Activated CD4-positive, alpha-beta T cell treated with anti-CD3 and anti-CD28 coated beads for 36 hours (primary cell): ENCODE measurements at regions of chr19 and their contacts with region 1.

Region 1: GRCh38 chr19:41706741-41707501 is 1.5 kb upstream of the CEACAM5 start:
- DNase-seq: peak; percentile 84
- ATAC-seq: peak; percentile 96
- H3K4me3 Mint-ChIP-seq: peak overlapping the region; percentile 28
- H3K27ac Mint-ChIP-seq: no peak overlapping the region
- H3K4me1 Mint-ChIP-seq: peaks cover 3% of the 10 kb centered on the region
- H3K27me3 Mint-ChIP-seq: peaks cover 26% of the 10 kb centered on the region

Region 2: DNA sequence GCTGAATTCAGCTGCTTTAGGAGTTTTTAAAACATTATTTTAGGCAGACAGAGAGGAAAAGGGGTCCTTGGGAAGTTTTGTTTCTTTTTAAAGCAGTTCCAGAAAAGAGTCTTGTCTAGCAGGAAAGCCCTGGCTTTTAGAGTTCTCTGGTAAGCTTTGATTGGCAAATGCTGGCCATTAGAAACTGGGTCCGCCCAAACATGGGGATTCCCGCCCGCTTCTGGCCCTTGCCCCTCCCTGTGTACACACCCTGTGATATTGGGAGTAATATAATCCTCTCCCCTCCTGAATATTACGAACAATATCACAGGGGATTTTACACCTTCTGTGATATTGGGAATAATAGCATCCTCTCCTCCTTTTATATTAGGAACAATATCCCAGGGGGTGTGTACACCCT is 205.1 kb before region 1 on chr19:
- CTCF ChIA-PET with region 1: no interaction called
- POLR2A ChIA-PET with region 1: no interaction called
- intact Hi-C with region 1: no loop called
- DNase-seq: no peak
- ATAC-seq: no peak
- H3K4me3 Mint-ChIP-seq: no peak overlapping the region
- H3K27ac Mint-ChIP-seq: no peak overlapping the region
- H3K4me1 Mint-ChIP-seq: peaks cover 3% of the 10 kb centered on the region
- H3K27me3 Mint-ChIP-seq: peaks cover 23% of the 10 kb centered on the region

Region 3: DNA sequence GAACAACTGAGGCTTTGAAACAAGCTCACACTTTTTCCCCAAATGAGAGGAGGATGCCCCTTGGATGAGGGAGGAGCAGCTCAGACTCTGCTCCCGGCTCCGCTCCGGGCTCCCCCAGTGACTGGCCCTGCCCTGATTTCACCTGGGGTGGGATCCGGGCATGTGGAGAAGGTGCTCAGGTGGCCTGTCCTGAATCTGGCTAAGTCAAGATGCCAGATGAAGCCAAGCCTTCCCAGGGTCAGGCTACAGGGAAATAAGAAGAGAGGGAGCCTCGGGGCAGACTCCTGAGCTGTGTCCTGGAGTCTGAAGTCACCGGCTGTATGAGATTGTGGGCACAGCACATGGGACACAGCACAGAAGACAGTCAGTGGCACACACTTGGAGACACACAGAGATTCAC is 11.8 kb after region 1 on chr19:
- CTCF ChIA-PET with region 1: interaction called, 11 read pairs
- POLR2A ChIA-PET with region 1: no interaction called
- intact Hi-C with region 1: no loop called
- DNase-seq: no peak
- ATAC-seq: no peak
- H3K4me3 Mint-ChIP-seq: no peak overlapping the region
- H3K27ac Mint-ChIP-seq: no peak overlapping the region
- H3K4me1 Mint-ChIP-seq: no peaks in the 10 kb centered on the region
- H3K27me3 Mint-ChIP-seq: peaks cover 27% of the 10 kb centered on the region

Region 4: DNA sequence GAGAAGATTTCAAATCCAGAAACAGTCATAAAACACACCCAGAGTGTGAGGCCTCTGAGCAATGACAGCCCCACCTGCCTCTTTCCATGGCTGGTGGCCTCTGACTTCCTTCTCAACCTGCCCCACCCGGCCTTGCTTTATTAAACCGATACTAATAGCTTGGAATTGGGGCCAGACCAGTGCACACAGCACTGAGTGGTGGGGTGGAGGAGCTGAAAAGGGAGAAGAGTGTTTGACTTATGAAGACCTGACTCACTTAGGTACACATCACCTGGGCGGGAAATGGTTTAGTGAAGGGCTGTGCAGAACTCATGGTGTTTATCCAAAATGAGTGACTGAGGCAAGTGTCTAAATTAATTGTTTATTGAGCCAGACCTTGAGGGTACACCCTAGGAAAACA is 27.7 kb after region 1 on chr19:
- CTCF ChIA-PET with region 1: interaction called, 17 read pairs
- POLR2A ChIA-PET with region 1: no interaction called
- intact Hi-C with region 1: no loop called
- DNase-seq: no peak
- ATAC-seq: no peak
- H3K4me3 Mint-ChIP-seq: no peak overlapping the region
- H3K27ac Mint-ChIP-seq: no peak overlapping the region
- H3K4me1 Mint-ChIP-seq: peaks cover 9% of the 10 kb centered on the region
- H3K27me3 Mint-ChIP-seq: peaks cover 53% of the 10 kb centered on the region

Region 5: DNA sequence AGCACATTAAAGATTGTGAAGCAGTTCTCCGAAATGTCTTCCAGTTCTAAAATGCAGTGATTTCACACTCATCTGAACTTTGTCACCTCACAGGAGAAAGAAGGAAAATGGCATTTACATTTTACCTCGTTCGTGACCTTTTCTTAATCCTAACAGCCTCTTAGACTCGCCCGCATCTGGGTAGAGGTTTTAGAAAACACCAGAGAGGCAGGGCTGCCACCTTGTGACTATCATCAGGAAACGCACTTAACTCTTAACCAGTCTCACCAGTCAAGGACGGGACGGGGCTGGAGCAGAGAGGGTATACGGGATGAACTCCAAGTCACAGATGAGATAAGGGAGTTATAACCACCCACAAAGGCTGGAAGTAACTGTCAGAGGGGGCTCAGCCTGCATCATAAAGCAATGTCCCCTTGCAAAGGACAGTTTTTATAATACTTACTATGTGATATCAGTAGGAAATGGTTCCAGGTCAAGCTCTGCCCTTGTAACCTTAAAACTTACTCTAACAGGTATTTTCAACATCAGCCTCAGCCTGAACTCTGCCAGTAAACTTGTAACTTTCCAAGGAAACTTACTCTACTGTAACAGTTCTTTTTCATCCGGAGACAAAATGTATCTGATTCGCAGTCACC is 39.8 kb after region 1 on chr19:
- CTCF ChIA-PET with region 1: interaction called, 25 read pairs
- POLR2A ChIA-PET with region 1: no interaction called
- intact Hi-C with region 1: loop called (anchors 1 kb)
- DNase-seq: peak; percentile 75
- ATAC-seq: peak; percentile 95
- H3K4me3 Mint-ChIP-seq: no peak overlapping the region
- H3K27ac Mint-ChIP-seq: no peak overlapping the region
- H3K4me1 Mint-ChIP-seq: peaks cover under 1% of the 10 kb centered on the region
- H3K27me3 Mint-ChIP-seq: peaks cover 62% of the 10 kb centered on the region

Region 6: DNA sequence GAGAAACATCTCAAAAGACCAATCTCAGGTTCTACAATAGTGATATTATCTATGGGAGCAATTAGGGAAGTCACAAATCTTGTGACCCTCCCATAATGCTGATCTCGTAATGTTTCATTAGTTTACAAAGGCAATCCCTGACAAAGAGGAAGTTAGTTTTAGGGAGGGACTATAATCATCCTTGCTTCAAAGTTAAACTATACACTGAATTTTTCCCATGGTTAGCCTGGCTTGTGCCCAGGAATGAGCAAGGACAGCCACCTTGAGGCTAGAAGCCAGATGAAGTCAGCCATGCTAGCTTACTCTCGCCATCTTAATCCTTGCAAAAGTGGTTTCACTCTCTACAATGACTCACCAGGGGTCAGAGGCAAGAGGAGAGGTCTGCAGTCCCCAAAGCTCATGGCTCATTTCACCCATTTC is 94.9 kb after region 1 on chr19:
- CTCF ChIA-PET with region 1: no interaction called
- POLR2A ChIA-PET with region 1: no interaction called
- intact Hi-C with region 1: no loop called
- DNase-seq: no peak
- ATAC-seq: peak; percentile 51
- H3K4me3 Mint-ChIP-seq: no peak overlapping the region
- H3K27ac Mint-ChIP-seq: no peak overlapping the region
- H3K4me1 Mint-ChIP-seq: peaks cover 17% of the 10 kb centered on the region
- H3K27me3 Mint-ChIP-seq: peaks cover 2% of the 10 kb centered on the region

Region 7: DNA sequence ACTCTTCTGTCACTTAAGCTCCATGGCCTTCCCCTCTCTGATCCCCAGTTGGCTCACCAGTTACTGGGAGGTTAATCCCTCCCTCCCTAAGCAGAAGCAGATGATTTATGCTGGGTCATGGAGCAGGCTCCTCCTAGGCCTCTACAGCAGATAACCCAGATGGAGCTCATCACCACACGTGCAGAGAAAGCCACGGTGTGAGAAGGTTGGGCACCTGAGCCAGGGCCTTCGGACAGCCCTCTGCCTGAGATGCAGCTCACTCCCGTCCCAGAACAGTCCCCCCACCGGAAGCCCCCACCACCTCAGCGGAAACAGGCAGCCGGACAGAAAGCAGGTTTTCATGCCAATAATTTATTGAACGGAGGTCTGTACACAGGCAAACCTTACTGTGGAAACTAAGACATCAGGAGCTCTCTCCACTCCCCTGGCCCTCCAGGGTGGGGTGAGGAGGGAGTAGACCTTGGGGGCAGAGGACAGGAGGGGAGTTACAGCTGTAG is 523.0 kb after region 1 on chr19:
- CTCF ChIA-PET with region 1: no interaction called
- POLR2A ChIA-PET with region 1: no interaction called
- intact Hi-C with region 1: no loop called
- DNase-seq: no peak
- ATAC-seq: no peak
- H3K4me3 Mint-ChIP-seq: no peak overlapping the region
- H3K27ac Mint-ChIP-seq: peak overlapping the region; percentile 75
- H3K4me1 Mint-ChIP-seq: peaks cover 19% of the 10 kb centered on the region
- H3K27me3 Mint-ChIP-seq: no peaks in the 10 kb centered on the region